ENCODE measurements at regions of chr5 and their contacts with region 1.

Region 1: DNA sequence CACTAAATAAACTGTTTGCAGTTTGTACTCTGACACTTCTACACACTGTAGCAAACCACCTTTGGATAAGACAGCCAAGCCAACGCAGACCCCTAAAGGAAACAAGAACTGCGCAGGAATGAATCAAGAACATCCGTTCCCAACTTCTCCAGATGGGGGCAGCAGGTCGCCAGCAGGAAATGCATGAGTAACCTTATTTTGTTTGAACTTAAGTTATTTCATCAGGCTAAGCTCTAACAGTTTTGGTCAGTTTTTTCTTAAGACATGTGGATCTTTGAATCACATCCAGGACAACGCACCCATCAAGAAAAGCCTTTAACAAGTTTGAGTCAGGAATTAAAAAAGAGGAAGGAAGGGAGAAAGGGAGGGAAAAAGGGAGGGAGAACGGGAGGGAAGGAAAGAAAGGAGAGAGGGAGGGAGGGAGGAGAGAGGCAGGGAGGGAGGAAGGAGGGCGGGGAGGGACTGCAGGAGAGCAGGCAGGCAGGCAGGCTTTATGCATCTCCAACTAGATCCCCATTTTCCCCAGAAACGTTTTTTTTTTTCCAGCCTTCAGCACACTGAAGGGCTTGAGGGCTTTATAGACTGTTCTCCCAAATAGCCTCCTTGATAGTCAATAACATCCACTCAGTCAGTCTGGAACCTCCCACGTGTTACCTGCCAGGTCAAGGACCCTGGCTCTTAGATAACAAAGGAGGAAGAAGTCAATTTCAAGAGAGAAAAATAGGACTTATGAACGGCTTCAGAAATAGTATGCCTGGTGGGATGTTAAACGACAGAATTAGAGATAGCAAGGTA is 22.2 kb downstream of the BHMT start:
- DNase-seq: peak; percentile 78
- ATAC-seq: peak; percentile 82
- H3K4me3 ChIP-seq: peak overlapping the region; percentile 21 to 41
- H3K27ac ChIP-seq: peak overlapping the region; percentile 59; the same call in 1 of the 2 replicates
- H3K4me1 ChIP-seq: peaks cover 7% of the 10 kb centered on the region
- H3K27me3 ChIP-seq: no peaks in the 10 kb centered on the region
- CTCF ChIP-seq: peak; percentile 92

Region 2: DNA sequence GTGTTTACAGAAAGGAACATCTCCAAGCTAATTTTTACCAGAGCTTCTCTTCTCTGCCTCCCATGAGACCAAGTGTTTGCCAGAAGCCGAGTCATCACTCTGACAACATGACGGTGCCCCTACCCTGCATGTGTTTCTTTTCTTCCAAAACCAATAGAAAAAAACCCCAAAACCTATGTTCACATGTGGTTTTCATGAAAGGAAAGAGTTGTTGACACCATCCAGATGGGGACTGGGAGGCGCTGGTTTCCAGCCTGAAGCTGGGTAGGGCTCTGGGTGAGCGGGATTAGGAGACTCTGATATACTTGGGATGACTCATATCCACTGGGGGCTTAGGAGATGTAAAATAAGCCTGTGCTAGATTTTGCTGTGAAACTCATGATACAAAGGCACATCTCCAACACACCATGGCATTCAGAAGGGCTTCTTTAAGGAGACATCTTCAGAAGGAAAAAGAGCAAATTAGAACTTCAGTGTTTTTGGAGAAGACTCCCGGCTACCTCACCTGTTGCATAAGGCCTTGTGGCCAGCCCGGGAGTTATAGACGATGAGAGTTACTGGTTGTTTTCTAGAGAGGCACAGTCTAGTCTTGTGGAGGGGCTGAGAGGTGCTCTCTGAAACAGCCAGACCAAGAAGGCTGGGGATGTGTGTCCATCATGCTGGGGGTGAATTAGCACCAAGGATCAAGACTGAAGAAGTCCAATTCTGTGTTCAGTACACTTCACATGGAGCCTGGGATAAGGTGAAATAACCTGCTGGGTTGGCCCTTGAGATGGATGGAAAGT is 376.4 kb before region 1 on chr5:
- CTCF ChIA-PET with region 1: no interaction called
- POLR2A ChIA-PET with region 1: no interaction called
- in situ Hi-C with region 1: no loop called
- intact Hi-C with region 1: no loop called
- DNase-seq: no peak
- ATAC-seq: no peak
- H3K4me3 ChIP-seq: no peak overlapping the region
- H3K27ac ChIP-seq: no peak overlapping the region
- H3K4me1 ChIP-seq: no peaks in the 10 kb centered on the region
- H3K27me3 ChIP-seq: peaks cover 4% of the 10 kb centered on the region; the same call in 1 of the 2 replicates
- CTCF ChIP-seq: no peak

Region 3: DNA sequence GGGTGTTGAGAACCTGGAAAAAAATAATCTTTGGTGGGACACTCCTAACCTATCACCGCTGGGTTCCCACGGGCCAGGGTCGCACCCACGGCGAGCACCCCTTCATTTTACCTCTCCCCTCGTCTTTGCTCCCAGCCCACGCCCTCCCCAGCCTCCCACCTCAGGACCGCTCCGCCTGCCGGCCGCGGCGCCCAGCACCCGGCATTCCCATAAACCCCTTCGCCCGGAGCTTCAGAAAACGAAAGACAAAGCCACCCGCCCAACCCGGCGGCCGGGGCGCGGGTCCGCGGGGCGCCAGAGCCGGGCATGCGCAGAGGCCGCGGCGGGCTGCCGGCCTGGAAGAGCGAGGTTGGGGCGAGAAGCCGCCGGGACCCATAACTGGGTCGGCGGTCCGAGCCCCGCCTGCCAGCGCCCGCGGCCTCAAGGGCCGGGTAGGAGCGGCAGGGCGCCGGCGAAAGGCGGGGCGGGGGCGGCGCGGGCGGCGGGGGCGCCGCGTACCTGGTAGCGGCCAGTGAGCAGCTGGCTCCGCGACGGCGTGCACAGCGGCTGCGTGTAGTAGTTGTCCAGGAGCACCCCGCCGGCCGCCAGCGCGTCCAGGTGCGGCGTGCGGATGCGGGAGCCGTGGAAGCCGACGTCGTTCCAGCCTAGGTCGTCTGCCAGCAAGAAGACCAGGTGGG is 149.3 kb before region 1 on chr5:
- CTCF ChIA-PET with region 1: interaction called, 25 read pairs
- POLR2A ChIA-PET with region 1: no interaction called
- in situ Hi-C with region 1: no loop called
- intact Hi-C with region 1: no loop called
- DNase-seq: peak; percentile 50
- ATAC-seq: peak; percentile 87
- H3K4me3 ChIP-seq: peak overlapping the region; percentile 64 to 68
- H3K27ac ChIP-seq: peak overlapping the region; percentile 90
- H3K4me1 ChIP-seq: peaks cover 25% of the 10 kb centered on the region
- H3K27me3 ChIP-seq: no peaks in the 10 kb centered on the region
- CTCF ChIP-seq: peak; percentile 23; the same call in 1 of the 2 replicates

Region 4: GRCh38 chr5:79030663-79031484 is 103.0 kb before region 1 on chr5:
- CTCF ChIA-PET with region 1: interaction called, 10 read pairs
- POLR2A ChIA-PET with region 1: no interaction called
- in situ Hi-C with region 1: no loop called
- intact Hi-C with region 1: no loop called
- DNase-seq: no peak
- ATAC-seq: no peak
- H3K4me3 ChIP-seq: no peak overlapping the region
- H3K27ac ChIP-seq: no peak overlapping the region
- H3K4me1 ChIP-seq: no peaks in the 10 kb centered on the region
- H3K27me3 ChIP-seq: peaks cover 14% of the 10 kb centered on the region
- CTCF ChIP-seq: no peak

Region 5: GRCh38 chr5:79109527-79110492 is 24.0 kb before region 1 on chr5:
- CTCF ChIA-PET with region 1: interaction called, 12 read pairs
- POLR2A ChIA-PET with region 1: no interaction called
- in situ Hi-C with region 1: no loop called
- intact Hi-C with region 1: no loop called
- DNase-seq: peak; percentile 2
- ATAC-seq: no peak
- H3K4me3 ChIP-seq: no peak overlapping the region
- H3K27ac ChIP-seq: no peak overlapping the region
- H3K4me1 ChIP-seq: no peaks in the 10 kb centered on the region
- H3K27me3 ChIP-seq: peaks cover 30% of the 10 kb centered on the region
- CTCF ChIP-seq: peak; percentile 74

Region 6: DNA sequence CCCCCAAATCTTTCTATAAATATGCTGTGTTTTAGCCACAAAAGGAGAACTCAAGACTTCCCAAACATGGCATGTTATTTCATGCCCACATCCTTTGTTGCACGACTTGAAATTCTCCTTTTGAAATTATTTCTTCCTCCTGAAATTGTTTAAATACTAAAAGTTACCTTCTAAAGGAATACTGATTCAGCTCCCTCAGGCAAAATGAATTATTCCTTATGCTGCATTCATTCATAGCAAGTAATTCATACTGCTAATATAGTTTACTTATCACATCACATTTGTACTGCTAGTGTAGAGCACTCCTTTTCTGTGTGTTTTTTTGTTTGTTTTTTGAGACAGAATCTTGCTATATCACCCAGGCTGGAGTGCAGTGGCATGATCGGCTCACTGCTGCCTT is 23.5 kb after region 1 on chr5:
- CTCF ChIA-PET with region 1: no interaction called
- POLR2A ChIA-PET with region 1: no interaction called
- in situ Hi-C with region 1: no loop called
- intact Hi-C with region 1: no loop called
- DNase-seq: no peak
- ATAC-seq: no peak
- H3K4me3 ChIP-seq: no peak overlapping the region
- H3K27ac ChIP-seq: no peak overlapping the region
- H3K4me1 ChIP-seq: no peaks in the 10 kb centered on the region
- H3K27me3 ChIP-seq: peaks cover 2% of the 10 kb centered on the region; the same call in 1 of the 2 replicates
- CTCF ChIP-seq: no peak

Region 7: GRCh38 chr5:79464695-79465332 is 331.0 kb after region 1 on chr5:
- CTCF ChIA-PET with region 1: interaction called, 6 read pairs
- POLR2A ChIA-PET with region 1: no interaction called
- in situ Hi-C with region 1: no loop called
- intact Hi-C with region 1: loop called (anchors 5 kb)
- DNase-seq: no peak
- ATAC-seq: peak; percentile 76
- H3K4me3 ChIP-seq: no peak overlapping the region
- H3K27ac ChIP-seq: no peak overlapping the region
- H3K4me1 ChIP-seq: no peaks in the 10 kb centered on the region
- H3K27me3 ChIP-seq: no peaks in the 10 kb centered on the region
- CTCF ChIP-seq: peak; percentile 69